ENCODE measurements at regions of chr12 and their contacts with region 1.

Region 1: DNA sequence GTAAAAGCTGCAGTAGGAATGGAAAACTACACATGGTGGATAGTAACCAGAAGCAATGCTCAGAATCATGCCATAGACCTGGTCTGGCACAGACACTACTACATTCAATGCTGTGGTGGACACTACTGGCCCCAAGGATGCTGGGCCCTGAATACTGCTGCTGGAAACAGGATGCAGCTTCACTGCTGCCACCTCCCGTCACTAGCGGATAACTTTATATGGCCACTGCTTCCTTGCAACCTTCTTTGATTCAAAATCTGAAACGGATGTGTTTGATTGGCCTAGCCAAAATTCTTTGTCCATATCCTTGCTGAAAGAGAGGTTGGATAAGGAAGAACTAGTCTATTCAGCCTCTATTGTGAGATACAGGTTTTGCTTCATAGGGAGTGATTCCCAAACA is 30.7 kb downstream of the ADCY6 start:
- DNase-seq: no peak
- ATAC-seq: no peak
- H3K4me3 ChIP-seq: no peak overlapping the region
- H3K27ac ChIP-seq: no peak overlapping the region
- H3K4me1 ChIP-seq: no peaks in the 10 kb centered on the region
- H3K27me3 ChIP-seq: no peaks in the 10 kb centered on the region
- CTCF ChIP-seq: no peak

Region 2: GRCh38 chr12:48795480-48796455 is 37.5 kb after region 1 on chr12:
- intact Hi-C with region 1: loop called (anchors 1 kb)
- DNase-seq: no peak
- ATAC-seq: peak; percentile 98
- H3K4me3 ChIP-seq: no peak overlapping the region
- H3K27ac ChIP-seq: no peak overlapping the region
- H3K4me1 ChIP-seq: peaks cover 4% of the 10 kb centered on the region
- H3K27me3 ChIP-seq: peaks cover 5% of the 10 kb centered on the region
- CTCF ChIP-seq: peak; percentile 94

Region 3: DNA sequence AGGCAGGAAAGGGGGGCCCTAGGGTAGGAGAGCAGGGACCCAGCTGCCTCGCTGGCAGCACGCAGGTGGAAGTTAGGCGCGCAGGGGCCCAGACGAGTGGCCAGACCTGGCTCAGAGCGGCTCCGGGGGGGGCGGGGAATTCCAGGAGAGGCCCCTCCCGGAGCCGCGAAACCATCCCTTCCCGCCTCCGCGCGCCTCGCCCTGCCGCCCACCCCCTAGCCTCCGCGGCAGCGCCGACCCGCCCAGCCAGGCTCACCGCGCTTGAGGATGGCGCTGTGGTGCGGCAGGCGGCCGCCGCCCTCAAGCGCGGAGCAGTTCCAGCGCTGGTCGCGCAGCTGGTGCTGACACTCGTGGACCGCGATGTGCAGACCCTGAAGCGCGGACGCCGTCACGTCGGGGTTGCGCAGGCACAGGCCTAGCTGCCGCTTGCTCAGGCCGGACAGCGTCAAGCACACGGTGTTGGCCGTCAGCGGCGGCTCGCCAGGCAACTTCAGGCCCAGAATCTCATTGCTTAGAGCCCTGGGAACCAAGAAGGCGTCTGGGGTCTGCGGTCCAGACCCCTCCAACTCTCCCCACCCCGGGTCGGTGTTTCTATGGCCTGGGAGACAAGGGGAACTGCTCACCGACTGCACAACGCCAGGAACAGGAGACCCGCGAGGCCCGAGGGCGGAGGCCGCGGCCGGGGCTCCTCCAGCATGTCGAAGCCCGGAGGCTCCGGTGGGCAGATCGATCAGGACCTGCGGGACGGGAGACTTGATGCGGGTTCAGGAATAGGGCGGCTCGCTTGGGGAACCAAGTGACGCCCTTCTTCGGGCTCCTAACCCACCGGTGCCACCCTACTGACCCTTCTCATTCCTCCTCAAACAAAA is 211.8 kb after region 1 on chr12:
- intact Hi-C with region 1: no loop called
- DNase-seq: no peak
- ATAC-seq: peak; percentile 41
- H3K4me3 ChIP-seq: no peak overlapping the region
- H3K27ac ChIP-seq: no peak overlapping the region
- H3K4me1 ChIP-seq: peaks cover 33% of the 10 kb centered on the region
- H3K27me3 ChIP-seq: peaks cover 56% of the 10 kb centered on the region
- CTCF ChIP-seq: no peak